Caco-2 (cell line): ENCODE measurements at regions of chr11 and their contacts with region 1.

Region 1: GRCh38 chr11:65911682-65912568 is 6.9 kb downstream of the C11orf68 start:
- DNase-seq: peak; percentile 65 to 73
- H3K4me3 ChIP-seq: no peak overlapping the region
- H3K4me3 Mint-ChIP-seq: peak overlapping the region; percentile 28
- H3K27ac Mint-ChIP-seq: no peak overlapping the region
- H3K4me1 ChIP-seq: peaks cover 8% of the 10 kb centered on the region
- H3K4me1 Mint-ChIP-seq: peaks cover 6% of the 10 kb centered on the region
- H3K27me3 ChIP-seq: no peaks in the 10 kb centered on the region
- H3K27me3 Mint-ChIP-seq: no peaks in the 10 kb centered on the region
- CTCF ChIP-seq: peak; percentile 46 to 77

Region 2: DNA sequence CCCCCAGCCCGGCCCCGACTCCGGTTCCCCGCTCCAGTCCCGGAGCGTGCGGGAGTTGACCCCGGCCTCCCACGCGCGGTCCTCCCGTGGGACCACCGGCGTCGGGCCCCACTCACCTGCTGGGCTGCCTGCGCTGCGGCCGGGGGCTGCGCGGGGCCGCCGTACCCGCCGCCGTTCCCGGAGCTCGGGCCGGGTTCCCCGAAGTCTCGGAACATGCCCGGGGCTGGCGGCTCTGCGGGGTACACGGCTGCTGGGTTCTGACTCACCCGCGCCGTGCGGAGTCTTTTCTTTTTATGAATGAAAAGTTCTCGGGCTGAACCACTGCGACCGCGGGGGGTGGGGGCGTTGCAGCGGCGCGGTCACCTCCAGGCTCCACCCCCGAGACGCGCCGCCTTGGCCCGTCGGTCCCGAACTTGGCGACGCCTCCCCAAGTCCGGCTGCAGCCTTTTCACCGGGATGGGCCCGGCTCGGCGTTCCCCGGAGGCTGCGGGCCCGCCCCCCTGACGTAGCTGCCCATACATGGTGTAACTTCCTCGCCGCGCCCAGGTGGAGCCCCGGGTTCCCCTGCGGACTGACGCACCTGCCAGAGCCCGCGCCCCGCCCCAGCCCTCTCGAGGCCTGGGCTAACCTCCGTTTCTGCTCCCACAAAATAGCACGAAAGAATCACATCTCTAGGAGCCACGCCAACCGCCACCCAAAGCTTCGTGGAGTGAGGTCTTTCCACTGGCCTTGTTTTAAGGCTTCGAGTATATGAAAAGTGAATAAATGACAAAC is 11.6 kb before region 1 on chr11 and contains the start of gene FOSL1:
- CTCF ChIA-PET with region 1: interaction called, 5 read pairs
- POLR2A ChIA-PET with region 1: interaction called, 5 read pairs
- intact Hi-C with region 1: loop called (anchors 1 kb)
- DNase-seq: peak; percentile 97
- H3K4me3 ChIP-seq: peak within 1 kb of the TSS; percentile 75
- H3K4me3 Mint-ChIP-seq: peak within 1 kb of the TSS; percentile 79
- H3K27ac Mint-ChIP-seq: peak within 1 kb of the TSS; percentile 76
- H3K4me1 ChIP-seq: peaks cover 29% of the 10 kb centered on the region
- H3K4me1 Mint-ChIP-seq: peaks cover 22% of the 10 kb centered on the region
- H3K27me3 ChIP-seq: no peaks in the 10 kb centered on the region; the same call in 1 of the 2 replicates
- H3K27me3 Mint-ChIP-seq: no peaks in the 10 kb centered on the region
- CTCF ChIP-seq: no peak
- total RNA-seq, gene FOSL1: 2.7 and 3.9 TPM in 2 replicates

Region 3: DNA sequence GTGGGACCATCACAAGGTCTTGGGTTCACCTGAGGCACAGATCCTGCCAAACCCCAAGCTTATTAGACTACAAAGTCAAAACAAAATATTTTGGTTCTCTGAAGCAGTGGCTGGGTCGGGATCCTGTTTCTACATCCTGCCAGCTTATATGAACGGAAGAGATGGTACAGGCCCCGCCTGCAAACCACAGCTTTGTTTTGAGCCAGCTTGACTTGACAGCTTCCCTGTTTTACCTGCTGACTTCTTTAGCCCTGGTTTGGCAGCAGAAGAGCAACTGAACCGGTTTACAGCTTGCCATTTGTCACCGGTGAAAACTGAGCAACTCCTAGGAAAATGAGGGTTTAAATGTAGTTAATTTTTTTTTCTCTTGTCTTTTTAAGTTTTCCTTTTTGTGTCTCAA is 169.6 kb after region 1 on chr11:
- CTCF ChIA-PET with region 1: no interaction called
- POLR2A ChIA-PET with region 1: no interaction called
- intact Hi-C with region 1: no loop called
- DNase-seq: no peak
- H3K4me3 ChIP-seq: no peak overlapping the region
- H3K4me3 Mint-ChIP-seq: no peak overlapping the region
- H3K27ac Mint-ChIP-seq: no peak overlapping the region
- H3K4me1 ChIP-seq: peaks cover 57% of the 10 kb centered on the region
- H3K4me1 Mint-ChIP-seq: peaks cover 34% of the 10 kb centered on the region
- H3K27me3 ChIP-seq: no peaks in the 10 kb centered on the region
- H3K27me3 Mint-ChIP-seq: no peaks in the 10 kb centered on the region
- CTCF ChIP-seq: no peak